ENCODE measurements at regions of chr5 and their contacts with region 1.

Region 1: GRCh38 chr5:64612344-64612961 is 77.8 kb upstream of the SHISAL2B start:
- DNase-seq: peak; percentile 76
- H3K4me3 ChIP-seq: no peak overlapping the region
- H3K27ac ChIP-seq: no peak overlapping the region
- H3K4me1 ChIP-seq: no peaks in the 10 kb centered on the region
- H3K27me3 ChIP-seq: peaks cover 5 to 42% of the 10 kb centered on the region in 2 experiments
- CTCF ChIP-seq: peak; percentile 61 to 64
- POLR2A ChIP-seq: no peak

Region 2: DNA sequence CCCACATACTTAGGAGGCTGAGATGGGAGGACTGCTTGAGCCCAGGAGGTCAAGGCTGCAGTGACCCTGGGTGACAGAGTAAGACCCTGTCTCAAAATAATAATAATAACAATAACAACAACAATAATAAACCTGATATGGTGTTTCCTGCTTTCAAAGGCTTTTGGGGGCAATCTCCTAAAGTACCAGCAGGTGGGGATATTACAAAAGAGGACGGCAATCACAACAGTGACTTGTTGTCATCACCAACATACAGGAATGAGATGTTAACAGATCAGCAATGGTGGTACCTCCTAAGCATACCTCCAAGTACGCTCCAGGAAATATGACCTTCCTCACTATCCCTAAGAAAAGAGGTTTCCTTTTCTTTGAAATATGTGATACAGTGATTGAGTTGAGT is 537.9 kb before region 1 on chr5:
- CTCF ChIA-PET with region 1: interaction called, 5 read pairs
- POLR2A ChIA-PET with region 1: no interaction called
- dilution Hi-C with region 1: no loop called
- intact Hi-C with region 1: loop called (anchors 2 kb)
- DNase-seq: peak; percentile 46
- H3K4me3 ChIP-seq: no peak overlapping the region
- H3K27ac ChIP-seq: no peak overlapping the region
- H3K4me1 ChIP-seq: no peaks in the 10 kb centered on the region
- H3K27me3 ChIP-seq: no peaks in the 10 kb centered on the region
- CTCF ChIP-seq: peak; percentile 60 to 64
- POLR2A ChIP-seq: no peak

Region 3: GRCh38 chr5:64221911-64222310 is 390.5 kb before region 1 on chr5:
- CTCF ChIA-PET with region 1: interaction called, 15 read pairs
- POLR2A ChIA-PET with region 1: no interaction called
- dilution Hi-C with region 1: no loop called
- intact Hi-C with region 1: no loop called
- DNase-seq: no peak
- H3K4me3 ChIP-seq: no peak overlapping the region
- H3K27ac ChIP-seq: no peak overlapping the region
- H3K4me1 ChIP-seq: no peaks in the 10 kb centered on the region
- H3K27me3 ChIP-seq: no peaks in the 10 kb centered on the region
- CTCF ChIP-seq: no peak
- POLR2A ChIP-seq: no peak

Region 4: GRCh38 chr5:64347309-64347708 is 265.1 kb before region 1 on chr5:
- CTCF ChIA-PET with region 1: interaction called, 36 read pairs
- POLR2A ChIA-PET with region 1: no interaction called
- dilution Hi-C with region 1: no loop called
- intact Hi-C with region 1: no loop called
- DNase-seq: peak; percentile 14
- H3K4me3 ChIP-seq: no peak overlapping the region
- H3K27ac ChIP-seq: no peak overlapping the region
- H3K4me1 ChIP-seq: no peaks in the 10 kb centered on the region
- H3K27me3 ChIP-seq: no peaks in the 10 kb centered on the region
- CTCF ChIP-seq: no peak
- POLR2A ChIP-seq: no peak

Region 5: DNA sequence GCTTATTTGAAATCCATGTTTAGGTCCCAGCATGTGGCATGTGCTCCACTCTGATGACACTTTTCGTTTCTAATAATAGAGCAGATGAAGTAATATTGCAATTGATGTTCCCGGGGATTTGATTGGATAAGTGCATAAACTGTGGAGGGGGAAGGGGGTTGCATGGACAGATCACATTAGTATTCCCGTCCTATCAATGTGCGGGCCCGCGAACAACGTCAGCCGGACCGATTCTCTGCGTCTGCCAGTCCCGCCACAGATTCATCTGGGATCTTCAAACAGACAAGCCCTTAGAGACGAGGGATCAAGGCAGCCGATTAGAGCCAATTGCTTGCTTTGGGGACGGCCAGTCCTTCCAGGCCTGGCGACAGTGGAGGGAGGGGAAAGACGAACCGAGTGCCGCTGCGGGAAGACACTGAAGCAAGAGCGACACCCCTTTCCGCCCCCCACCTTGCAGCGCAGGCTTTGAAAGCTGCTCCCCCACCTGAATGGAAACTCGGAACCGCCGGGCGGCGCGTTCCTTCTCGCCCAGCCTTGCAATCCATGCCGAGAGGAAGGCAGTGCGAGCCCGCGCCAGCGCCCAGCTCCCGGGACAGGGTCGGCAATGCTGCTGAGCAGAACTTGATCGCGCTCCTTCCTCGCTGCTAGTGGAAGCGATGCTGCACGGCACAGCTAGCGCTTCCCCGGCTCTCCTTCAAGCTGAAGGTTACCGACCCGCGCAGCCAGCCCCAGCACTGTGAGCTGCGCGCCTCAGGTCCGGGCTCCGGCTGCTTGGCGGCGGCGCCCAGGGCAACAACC is 106.5 kb before region 1 on chr5 and contains the start of gene RGS7BP:
- CTCF ChIA-PET with region 1: interaction called, 29 read pairs
- POLR2A ChIA-PET with region 1: no interaction called
- dilution Hi-C with region 1: no loop called
- intact Hi-C with region 1: loop called (anchors 1 kb)
- DNase-seq: peak; percentile 66
- H3K4me3 ChIP-seq: peak within 1 kb of the TSS; percentile 27 to 48 (median 47)
- H3K27ac ChIP-seq: no peak within 1 kb of the TSS
- H3K4me1 ChIP-seq: peaks cover 33% of the 10 kb centered on the region
- H3K27me3 ChIP-seq: peaks cover 21 to 32% of the 10 kb centered on the region in 2 experiments
- CTCF ChIP-seq: no peak
- POLR2A ChIP-seq: no peak
- total RNA-seq, gene RGS7BP: 2.0 and 4.2 TPM in 2 replicates

Measured in endothelial cell of umbilical vein (primary cell).